CD8-positive, alpha-beta memory T cell (primary cell): ENCODE measurements at regions of chr10 and their contacts with region 1.

Region 1: DNA sequence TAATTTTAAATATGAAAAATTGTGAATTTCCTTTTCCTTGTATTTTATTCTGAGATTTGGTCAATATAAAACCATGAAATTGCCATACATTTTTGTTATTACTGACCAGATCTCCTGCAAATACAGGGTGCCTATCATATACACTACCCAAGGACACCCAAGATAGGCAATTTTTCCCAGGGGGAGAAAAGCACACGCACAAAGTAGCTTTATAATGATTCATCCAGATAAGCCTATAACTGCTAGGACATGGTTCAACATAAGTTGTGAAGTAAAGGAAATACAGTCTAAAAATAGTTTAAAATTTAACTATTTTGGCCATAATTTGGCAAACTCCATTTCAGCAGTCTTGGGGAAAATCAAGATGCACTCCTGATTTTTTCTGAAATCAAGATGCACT is 4.8 kb downstream of the RUFY2 start:
- DNase-seq: no peak
- H3K4me3 ChIP-seq: no peak overlapping the region
- H3K4me3 Mint-ChIP-seq: no peak overlapping the region
- H3K27ac ChIP-seq: no peak overlapping the region
- H3K27ac Mint-ChIP-seq: no peak overlapping the region
- H3K4me1 ChIP-seq: peaks cover 11% of the 10 kb centered on the region
- H3K4me1 Mint-ChIP-seq: peaks cover 19 to 31% (median 24%) of the 10 kb centered on the region in 3 donors
- H3K27me3 ChIP-seq: no peaks in the 10 kb centered on the region
- H3K27me3 Mint-ChIP-seq: no peaks in the 10 kb centered on the region

Region 2: DNA sequence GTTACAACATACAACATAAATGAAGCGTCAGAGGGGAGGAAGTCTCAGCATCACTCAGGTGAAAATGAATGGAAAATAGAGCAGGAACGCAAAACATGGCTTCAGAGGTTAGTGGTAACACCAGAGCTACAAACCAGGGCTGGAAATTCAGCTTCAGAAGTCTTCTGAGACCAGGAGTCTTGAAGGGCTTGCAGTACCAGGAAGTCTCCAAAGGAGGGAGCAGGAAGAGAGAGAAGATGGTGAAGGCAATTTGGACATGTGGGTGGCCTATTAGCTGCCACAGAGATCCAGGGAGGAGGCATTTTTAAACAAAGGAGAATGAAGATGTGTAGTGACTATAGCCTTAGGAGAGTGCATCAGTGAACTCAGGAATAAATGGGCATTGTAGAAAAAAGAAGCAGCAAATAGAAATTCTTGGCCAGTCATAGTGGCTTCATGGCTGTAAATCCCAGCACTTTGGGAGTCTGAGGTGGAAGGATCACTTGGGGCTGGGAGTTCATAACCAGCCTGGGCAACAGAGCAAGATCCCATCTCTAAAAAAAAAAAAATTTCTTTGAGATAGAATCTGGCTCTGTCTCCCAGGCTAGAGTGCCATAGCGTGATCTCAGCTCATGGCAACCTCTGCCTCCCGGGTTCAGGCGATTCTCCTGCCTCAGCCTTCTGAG is 148.6 kb after region 1 on chr10:
- CTCF ChIA-PET with region 1: no interaction called
- POLR2A ChIA-PET with region 1: interaction called, 11 read pairs
- DNase-seq: peak in 4 of 5 donors; percentile 5 to 43 (median 24)
- H3K4me3 ChIP-seq: no peak overlapping the region
- H3K4me3 Mint-ChIP-seq: no peak overlapping the region
- H3K27ac ChIP-seq: no peak overlapping the region
- H3K27ac Mint-ChIP-seq: peak overlapping the region in 1 of 8 donors; percentile 51
- H3K4me1 ChIP-seq: no peaks in the 10 kb centered on the region
- H3K4me1 Mint-ChIP-seq: no peaks in the 10 kb centered on the region
- H3K27me3 ChIP-seq: no peaks in the 10 kb centered on the region
- H3K27me3 Mint-ChIP-seq: peaks cover 3 to 4% of the 10 kb centered on the region in 2 donors